ENCODE measurements at regions of chr14 and their contacts with region 1.

Region 1: GRCh38 chr14:37618498-37619028 is 23.1 kb downstream of the TTC6 start:
- DNase-seq: no peak
- ATAC-seq: no peak
- H3K4me3 ChIP-seq: no peak overlapping the region
- H3K27ac ChIP-seq: no peak overlapping the region
- H3K4me1 ChIP-seq: no peaks in the 10 kb centered on the region
- H3K27me3 ChIP-seq: peaks cover 8% of the 10 kb centered on the region
- CTCF ChIP-seq: no peak

Region 2: GRCh38 chr14:36591482-36591881 is 1027.1 kb before region 1 on chr14:
- intact Hi-C with region 1: loop called (anchors 5 kb)
- DNase-seq: no peak
- ATAC-seq: no peak
- H3K4me3 ChIP-seq: no peak overlapping the region
- H3K27ac ChIP-seq: no peak overlapping the region
- H3K4me1 ChIP-seq: no peaks in the 10 kb centered on the region
- H3K27me3 ChIP-seq: peaks cover 42% of the 10 kb centered on the region
- CTCF ChIP-seq: no peak

Region 3: DNA sequence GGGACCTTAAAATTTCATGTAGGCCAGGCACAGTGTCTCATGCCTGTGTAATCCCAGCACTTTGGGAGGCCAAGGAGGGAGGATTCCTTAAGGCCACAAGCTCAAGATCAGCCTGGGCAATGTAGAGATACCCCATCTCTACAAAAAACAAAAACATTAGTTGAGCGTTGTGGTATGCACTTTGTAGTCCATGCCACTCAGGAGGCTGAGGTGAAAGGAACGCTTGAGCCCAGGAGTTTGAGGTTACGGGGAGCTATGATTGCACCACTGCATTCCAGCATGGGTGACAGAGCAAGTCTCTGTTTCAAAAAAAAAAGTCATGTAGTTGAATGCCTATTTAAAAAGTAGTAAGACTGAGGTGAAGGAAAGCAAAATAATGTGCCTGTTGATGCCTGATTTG is 60.4 kb after region 1 on chr14:
- intact Hi-C with region 1: no loop called
- DNase-seq: no peak
- ATAC-seq: no peak
- H3K4me3 ChIP-seq: no peak overlapping the region
- H3K27ac ChIP-seq: no peak overlapping the region
- H3K4me1 ChIP-seq: no peaks in the 10 kb centered on the region
- H3K27me3 ChIP-seq: no peaks in the 10 kb centered on the region
- CTCF ChIP-seq: no peak

Region 4: DNA sequence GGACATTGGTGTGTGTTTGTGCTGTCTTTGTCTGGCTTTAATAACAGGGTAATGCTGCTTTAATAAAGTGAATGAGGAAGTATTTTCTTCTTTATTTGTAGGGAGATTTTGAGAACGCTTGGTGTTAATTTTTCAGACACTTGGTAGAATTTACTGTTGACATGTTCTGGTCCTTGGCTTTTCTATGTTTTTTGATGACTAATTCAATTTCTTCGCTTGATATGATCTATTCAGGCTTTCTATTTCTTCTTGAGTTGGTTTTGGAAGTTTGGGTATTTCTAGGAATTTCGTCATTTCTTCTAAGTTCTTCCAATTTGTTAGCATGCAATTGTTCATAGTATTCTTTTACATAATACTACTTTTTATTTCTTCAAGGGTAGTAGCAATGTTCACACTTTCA is 144.7 kb after region 1 on chr14:
- intact Hi-C with region 1: no loop called
- DNase-seq: no peak
- ATAC-seq: no peak
- H3K4me3 ChIP-seq: no peak overlapping the region
- H3K27ac ChIP-seq: no peak overlapping the region
- H3K4me1 ChIP-seq: no peaks in the 10 kb centered on the region
- H3K27me3 ChIP-seq: no peaks in the 10 kb centered on the region
- CTCF ChIP-seq: no peak

Measured in upper lobe of right lung (tissue), 1 donor.